GM10248 (cell line): ENCODE measurements at regions of chr2 and their contacts with region 1.

Region 1: GRCh38 chr2:84223191-84223590 is 235.9 kb downstream of the SUCLG1 start:
- DNase-seq: no peak
- CTCF ChIP-seq: no peak

Region 2: GRCh38 chr2:83953697-83954096 is 269.5 kb before region 1 on chr2:
- CTCF ChIA-PET with region 1: no interaction called
- POLR2A ChIA-PET with region 1: no interaction called
- DNase-seq: no peak
- CTCF ChIP-seq: no peak

Region 3: GRCh38 chr2:84201158-84201557 is 22.0 kb before region 1 on chr2:
- CTCF ChIA-PET with region 1: no interaction called
- POLR2A ChIA-PET with region 1: no interaction called
- DNase-seq: no peak
- CTCF ChIP-seq: no peak

Region 4: GRCh38 chr2:84212611-84213314 is 10.4 kb before region 1 on chr2:
- CTCF ChIA-PET with region 1: interaction called, 12 read pairs
- POLR2A ChIA-PET with region 1: no interaction called
- DNase-seq: peak; percentile 21
- CTCF ChIP-seq: no peak

Region 5: DNA sequence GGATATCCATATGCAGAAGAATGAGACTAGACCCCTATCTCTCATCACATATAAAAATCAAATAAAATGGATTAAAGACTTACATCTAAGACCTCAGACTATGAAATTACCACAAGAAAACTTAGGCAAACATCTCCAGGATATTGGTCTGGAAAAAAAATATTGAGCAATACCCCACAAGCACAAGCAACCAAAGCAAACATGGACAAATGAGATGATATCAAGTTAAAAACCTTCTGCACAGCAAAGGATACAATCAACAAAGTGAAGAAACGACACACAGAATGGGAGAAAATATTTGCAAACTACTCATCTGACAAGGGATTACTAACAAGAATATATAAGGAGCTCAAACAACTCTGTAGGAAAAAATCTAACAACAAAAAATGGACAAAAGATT is 112.7 kb after region 1 on chr2:
- CTCF ChIA-PET with region 1: no interaction called
- POLR2A ChIA-PET with region 1: no interaction called
- DNase-seq: no peak
- CTCF ChIP-seq: no peak